SK-N-SH (cell line): ENCODE measurements at regions of chr2 and their contacts with region 1.

Region 1: GRCh38 chr2:132547074-132547687 is 122.8 kb downstream of the LYPD1 start:
- DNase-seq: peak; percentile 64
- H3K4me3 ChIP-seq: peak overlapping the region in 1 of 2 experiments; percentile 6; a peak in 1 of 4 replicates
- H3K27ac ChIP-seq: no peak overlapping the region
- H3K4me1 ChIP-seq: peaks cover 0 to 7% of the 10 kb centered on the region in 2 experiments; a peak in 2 of 4 replicates
- H3K27me3 ChIP-seq: no peaks in the 10 kb centered on the region
- CTCF ChIP-seq: peak; percentile 79
- EP300 ChIP-seq: no peak
- RAD21 ChIP-seq: peak; percentile 87

Region 2: DNA sequence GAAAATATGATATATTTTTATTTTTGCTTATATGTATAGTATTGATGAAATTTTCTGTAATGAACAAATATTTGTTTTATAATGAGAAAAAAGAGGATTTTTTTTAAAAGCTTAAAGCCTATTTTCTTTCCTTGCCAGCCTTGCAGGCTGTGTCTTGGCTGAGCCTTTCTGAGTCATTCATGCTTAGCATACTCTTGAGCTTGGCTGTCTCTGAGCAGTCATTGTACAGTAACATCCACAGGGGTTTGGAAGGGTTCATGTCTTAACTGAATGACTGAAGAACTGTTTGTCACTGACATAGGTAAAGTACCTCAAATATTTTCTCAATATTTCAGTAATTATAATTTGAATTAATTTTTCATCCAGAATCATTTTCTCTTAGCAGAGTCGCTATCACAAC is 81.3 kb before region 1 on chr2:
- CTCF ChIA-PET with region 1: no interaction called
- POLR2A ChIA-PET with region 1: no interaction called
- DNase-seq: no peak
- H3K4me3 ChIP-seq: no peak overlapping the region
- H3K27ac ChIP-seq: no peak overlapping the region
- H3K4me1 ChIP-seq: no peaks in the 10 kb centered on the region
- H3K27me3 ChIP-seq: no peaks in the 10 kb centered on the region
- CTCF ChIP-seq: no peak
- EP300 ChIP-seq: no peak
- RAD21 ChIP-seq: no peak

Region 3: DNA sequence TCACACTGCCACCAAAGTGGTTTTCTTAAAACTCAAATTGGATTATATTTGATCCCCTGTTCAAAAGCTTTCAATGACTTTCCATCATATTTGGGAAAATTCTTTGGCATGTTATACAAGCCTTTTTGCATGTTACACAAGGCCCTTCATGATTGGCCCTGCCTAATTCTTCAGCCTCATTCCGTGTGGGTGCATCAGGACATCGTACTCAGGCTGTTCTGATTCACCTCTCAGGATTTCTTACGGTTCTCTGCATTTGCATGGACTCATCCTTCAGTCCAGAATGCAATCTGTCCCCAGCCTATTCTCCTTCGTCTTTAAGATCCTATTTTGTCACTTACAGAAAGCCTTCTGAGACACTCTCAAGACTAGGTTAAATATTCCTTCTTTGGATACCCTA is 15.1 kb after region 1 on chr2:
- CTCF ChIA-PET with region 1: interaction called, 31 read pairs
- POLR2A ChIA-PET with region 1: no interaction called
- DNase-seq: no peak
- H3K4me3 ChIP-seq: no peak overlapping the region
- H3K27ac ChIP-seq: no peak overlapping the region
- H3K4me1 ChIP-seq: no peaks in the 10 kb centered on the region
- H3K27me3 ChIP-seq: no peaks in the 10 kb centered on the region
- CTCF ChIP-seq: no peak
- EP300 ChIP-seq: no peak
- RAD21 ChIP-seq: no peak